ENCODE measurements at regions of chr17 and their contacts with region 1.

Region 1: GRCh38 chr17:62727916-62728672 is 80.0 kb downstream of the MARCHF10 start:
- DNase-seq: no peak
- H3K4me3 ChIP-seq: no peak overlapping the region
- H3K27ac ChIP-seq: no peak overlapping the region
- H3K4me1 ChIP-seq: no peaks in the 10 kb centered on the region
- H3K27me3 ChIP-seq: no peaks in the 10 kb centered on the region
- CTCF ChIP-seq: no peak

Region 2: DNA sequence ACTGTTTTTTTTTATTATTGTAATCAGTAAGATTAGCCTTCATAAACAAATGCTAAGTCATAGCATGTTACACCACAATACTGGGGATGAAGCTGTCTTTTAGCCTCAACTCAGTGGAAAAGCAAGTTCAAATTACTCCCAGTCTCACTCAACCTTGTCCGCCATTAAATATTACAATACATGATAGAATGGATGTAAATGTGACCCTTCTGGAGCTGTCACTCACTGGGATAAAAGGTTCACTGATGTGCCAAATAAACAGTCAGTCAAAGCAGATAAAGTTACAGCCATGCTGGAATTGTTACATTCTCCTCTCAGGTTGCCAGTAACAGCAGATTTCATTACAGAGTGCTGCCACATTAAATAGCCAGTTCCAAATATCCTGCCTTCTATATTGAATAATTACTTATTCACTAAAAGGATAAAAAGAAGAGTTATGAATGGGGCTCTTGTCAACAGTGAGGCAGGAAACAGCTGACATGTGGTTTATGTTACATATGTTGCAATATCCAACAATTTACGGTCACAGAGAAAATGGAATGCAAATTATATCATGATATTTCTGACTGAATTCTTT is 918.2 kb before region 1 on chr17:
- CTCF ChIA-PET with region 1: no interaction called
- POLR2A ChIA-PET with region 1: no interaction called
- intact Hi-C with region 1: no loop called
- DNase-seq: peak; percentile 92
- H3K4me3 ChIP-seq: no peak overlapping the region
- H3K27ac ChIP-seq: peak overlapping the region; percentile 51
- H3K4me1 ChIP-seq: peaks cover 18% of the 10 kb centered on the region
- H3K27me3 ChIP-seq: no peaks in the 10 kb centered on the region
- CTCF ChIP-seq: no peak

Region 3: GRCh38 chr17:62714016-62714746 is 13.9 kb before region 1 on chr17:
- CTCF ChIA-PET with region 1: interaction called, 3 read pairs
- POLR2A ChIA-PET with region 1: interaction called, 16 read pairs
- intact Hi-C with region 1: no loop called
- DNase-seq: no peak
- H3K4me3 ChIP-seq: no peak overlapping the region
- H3K27ac ChIP-seq: no peak overlapping the region
- H3K4me1 ChIP-seq: no peaks in the 10 kb centered on the region
- H3K27me3 ChIP-seq: no peaks in the 10 kb centered on the region
- CTCF ChIP-seq: no peak

Measured in A673 (cell line).